Sigmoid colon (tissue), 7 donors: ENCODE measurements at regions of chr17 and their contacts with region 1.

Region 1: GRCh38 chr17:7280519-7281429 is 744 bp upstream of the SLC2A4 start:
- DNase-seq: peak; percentile 91
- H3K4me3 ChIP-seq: peak overlapping the region; percentile 15 to 83 (median 68)
- H3K27ac ChIP-seq: peak overlapping the region; percentile 93 to 98 (median 96)
- H3K4me1 ChIP-seq: peaks cover 0 to 46% (median 38%) of the 10 kb centered on the region in 4 donors
- H3K27me3 ChIP-seq: no peaks in the 10 kb centered on the region
- CTCF ChIP-seq: peak; percentile 88 to 98 (median 94)
- EP300 ChIP-seq: peak in 2 of 4 donors; percentile 18 to 62
- POLR2A ChIP-seq: no peak

Region 2: DNA sequence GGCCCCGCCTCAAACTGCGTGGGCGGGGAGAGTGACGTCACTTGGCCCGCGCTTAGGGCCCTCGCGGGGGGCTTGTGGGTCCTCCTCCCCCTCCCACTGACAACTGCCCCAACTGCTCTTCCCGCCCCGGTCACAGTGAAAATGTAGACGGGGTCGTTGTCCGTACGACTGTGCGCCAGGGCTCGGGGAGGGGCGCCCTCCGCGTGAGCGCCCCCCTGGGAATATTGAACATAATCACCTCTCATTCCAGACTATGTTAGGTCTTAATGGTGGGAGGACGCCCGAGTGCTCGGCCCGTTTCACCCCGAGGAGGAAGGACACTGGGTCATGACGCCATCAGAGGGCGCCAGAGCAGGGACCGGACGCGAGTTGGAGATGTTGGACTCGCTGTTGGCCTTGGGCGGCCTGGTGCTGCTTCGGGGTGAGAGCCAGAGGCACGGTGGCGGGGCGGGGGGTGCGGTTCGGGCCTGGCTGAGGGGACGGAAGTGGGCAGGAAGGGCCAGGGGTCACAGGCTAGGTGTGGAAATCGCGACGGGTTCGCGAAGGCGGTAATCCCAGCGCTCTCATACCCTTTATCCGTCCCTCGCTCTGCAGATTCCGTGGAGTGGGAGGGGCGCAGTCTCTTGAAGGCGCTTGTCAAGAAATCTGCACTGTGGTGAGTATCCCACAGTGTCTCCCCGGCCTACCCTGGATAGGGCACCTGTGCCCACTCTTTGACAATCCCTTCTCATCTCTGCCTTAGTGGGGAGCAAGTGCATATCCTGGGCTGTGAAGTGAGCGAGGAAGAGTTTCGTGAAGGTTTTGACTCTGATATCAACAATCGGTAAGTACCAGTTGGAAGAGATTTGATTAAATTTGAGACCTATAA is 28.4 kb before region 1 on chr17 and contains the start of gene ELP5:
- intact Hi-C with region 1: loop called (anchors 2 kb)
- DNase-seq: peak; percentile 97
- H3K4me3 ChIP-seq: peak within 1 kb of the TSS; percentile 79 to 99 (median 88)
- H3K27ac ChIP-seq: peak within 1 kb of the TSS; percentile 97 to 99 (median 98)
- H3K4me1 ChIP-seq: peaks cover 0 to 43% (median 35%) of the 10 kb centered on the region in 4 donors
- H3K27me3 ChIP-seq: no peaks in the 10 kb centered on the region
- CTCF ChIP-seq: no peak
- EP300 ChIP-seq: peak in 2 of 4 donors; percentile 38 to 41
- POLR2A ChIP-seq: no peak
- total RNA-seq, gene ELP5: 28.4 to 40.0 (median 34.2) TPM

Region 3: DNA sequence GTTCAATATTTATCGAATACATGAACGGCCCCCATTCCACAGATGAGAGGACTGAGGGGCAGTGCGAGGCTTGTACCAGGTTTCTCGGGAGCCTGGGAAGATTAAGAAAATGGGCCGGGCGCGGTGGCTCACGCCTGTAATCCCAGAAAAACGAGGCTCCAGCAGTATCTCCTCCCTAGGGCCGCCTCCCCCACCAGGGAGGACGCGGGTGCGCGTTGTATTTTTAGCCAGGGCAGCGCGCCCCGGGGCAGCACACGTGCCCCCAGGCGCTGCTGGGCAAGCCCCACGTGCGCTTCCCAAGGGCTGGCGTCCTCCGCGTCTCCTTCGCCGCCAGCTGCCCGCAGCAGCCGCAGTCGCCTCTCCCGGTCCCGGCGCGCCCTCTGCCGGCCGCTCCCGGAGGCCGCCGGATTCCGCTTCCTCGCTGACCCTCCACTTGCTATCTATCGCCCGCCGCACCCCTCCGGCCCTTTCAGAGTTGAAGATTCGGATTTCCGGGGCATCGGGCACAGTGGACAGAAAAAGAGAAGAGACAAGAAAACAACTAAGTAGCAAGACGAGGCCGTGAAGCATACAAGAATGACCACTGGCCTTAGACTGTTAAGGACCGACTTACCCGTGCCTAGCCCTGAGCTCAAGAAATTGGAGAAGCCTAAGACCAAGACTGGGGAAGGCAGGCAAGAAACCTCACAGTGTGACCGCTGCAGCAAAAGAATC is 15.6 kb after region 1 on chr17:
- intact Hi-C with region 1: loop called (anchors 1 kb)
- DNase-seq: peak; percentile 94
- H3K4me3 ChIP-seq: peak overlapping the region in 2 of 4 donors; percentile 14 to 25
- H3K27ac ChIP-seq: peak overlapping the region; percentile 76 to 83 (median 79)
- H3K4me1 ChIP-seq: peaks cover 0 to 55% (median 54%) of the 10 kb centered on the region in 4 donors
- H3K27me3 ChIP-seq: peaks cover 11 to 37% (median 18%) of the 10 kb centered on the region in 3 donors
- CTCF ChIP-seq: peak; percentile 93 to 96 (median 94)
- EP300 ChIP-seq: peak in 2 of 4 donors; percentile 78 to 92
- POLR2A ChIP-seq: no peak

Region 4: GRCh38 chr17:7383742-7384488 is 103.1 kb after region 1 on chr17:
- intact Hi-C with region 1: no loop called
- DNase-seq: peak; percentile 72
- H3K4me3 ChIP-seq: peak overlapping the region; percentile 12 to 49 (median 44)
- H3K27ac ChIP-seq: peak overlapping the region; percentile 48 to 55 (median 50)
- H3K4me1 ChIP-seq: peaks cover 2 to 34% (median 30%) of the 10 kb centered on the region in 4 donors
- H3K27me3 ChIP-seq: no peaks in the 10 kb centered on the region
- CTCF ChIP-seq: no peak
- EP300 ChIP-seq: no peak
- POLR2A ChIP-seq: no peak